ENCODE measurements at regions of chr4 and their contacts with region 1.

Region 1: DNA sequence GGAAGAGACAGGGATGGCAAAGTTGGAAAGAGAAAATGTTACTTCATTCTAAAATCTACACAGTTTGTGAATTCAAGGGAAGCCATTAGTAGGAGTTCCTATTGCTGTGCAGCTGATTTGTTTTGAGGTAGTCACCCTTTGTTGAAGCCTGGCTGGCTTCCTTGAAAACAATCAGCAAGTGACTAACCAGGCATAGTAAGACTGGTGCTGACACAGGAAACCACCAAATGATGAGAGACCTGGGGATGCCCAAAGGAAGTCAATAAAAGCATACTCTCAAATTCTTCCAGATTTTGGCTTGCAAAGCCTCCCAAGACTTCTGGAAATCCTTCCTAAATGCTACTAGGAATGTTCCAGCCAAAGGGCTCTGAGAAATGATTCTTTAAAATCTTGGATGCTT is 23.9 kb upstream of the PRDM8 start:
- DNase-seq: peak; percentile 82
- ATAC-seq: peak; percentile 93
- H3K4me3 ChIP-seq: peak overlapping the region in 1 of 5 experiments; percentile 47
- H3K4me3 Mint-ChIP-seq: peak overlapping the region; percentile 87
- H3K27ac ChIP-seq: peak overlapping the region; percentile 80 to 84
- H3K27ac Mint-ChIP-seq: peak overlapping the region; percentile 98
- H3K4me1 ChIP-seq: peaks cover 41 to 42% of the 10 kb centered on the region in 2 donors
- H3K4me1 Mint-ChIP-seq: peaks cover 60% of the 10 kb centered on the region
- H3K27me3 ChIP-seq: no peaks in the 10 kb centered on the region
- H3K27me3 Mint-ChIP-seq: no peaks in the 10 kb centered on the region
- CTCF ChIP-seq: no peak

Region 2: DNA sequence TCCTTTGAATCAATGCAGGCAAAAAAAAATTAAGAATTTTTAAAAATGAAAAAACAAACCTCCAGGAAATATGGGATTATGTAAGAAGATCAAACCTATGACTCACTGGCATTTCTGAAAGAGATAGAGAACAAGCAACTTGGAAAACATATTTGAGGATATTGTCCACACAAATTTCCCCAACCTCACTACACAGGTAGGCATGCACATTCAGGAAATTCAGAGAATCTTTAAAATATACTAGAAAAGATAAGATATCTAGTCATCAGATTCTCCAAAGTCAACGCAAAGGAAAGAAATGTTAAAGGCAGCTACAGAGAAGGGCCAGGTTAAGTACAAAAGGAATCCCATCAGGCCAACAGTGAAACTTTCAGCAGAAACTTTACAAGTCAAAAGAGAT is 186.0 kb before region 1 on chr4:
- CTCF ChIA-PET with region 1: no interaction called
- POLR2A ChIA-PET with region 1: no interaction called
- intact Hi-C with region 1: no loop called
- DNase-seq: no peak
- ATAC-seq: no peak
- H3K4me3 ChIP-seq: no peak overlapping the region
- H3K4me3 Mint-ChIP-seq: no peak overlapping the region
- H3K27ac ChIP-seq: no peak overlapping the region
- H3K27ac Mint-ChIP-seq: no peak overlapping the region
- H3K4me1 ChIP-seq: peaks cover 0 to 3% of the 10 kb centered on the region in 2 donors
- H3K4me1 Mint-ChIP-seq: peaks cover 27% of the 10 kb centered on the region
- H3K27me3 ChIP-seq: no peaks in the 10 kb centered on the region
- H3K27me3 Mint-ChIP-seq: no peaks in the 10 kb centered on the region
- CTCF ChIP-seq: no peak

Region 3: GRCh38 chr4:80153874-80154544 is 19.4 kb before region 1 on chr4:
- CTCF ChIA-PET with region 1: interaction called, 7 read pairs
- POLR2A ChIA-PET with region 1: no interaction called
- intact Hi-C with region 1: loop called (anchors 2 kb)
- DNase-seq: no peak
- ATAC-seq: no peak
- H3K4me3 ChIP-seq: no peak overlapping the region
- H3K4me3 Mint-ChIP-seq: no peak overlapping the region
- H3K27ac ChIP-seq: no peak overlapping the region
- H3K27ac Mint-ChIP-seq: no peak overlapping the region
- H3K4me1 ChIP-seq: no peaks in the 10 kb centered on the region
- H3K4me1 Mint-ChIP-seq: no peaks in the 10 kb centered on the region
- H3K27me3 ChIP-seq: no peaks in the 10 kb centered on the region
- H3K27me3 Mint-ChIP-seq: peaks cover 11% of the 10 kb centered on the region
- CTCF ChIP-seq: no peak